Adrenal gland (tissue), 19 donors: ENCODE measurements at regions of chr14 and their contacts with region 1.

Region 1: GRCh38 chr14:75278422-75279161 is at the start of gene FOS:
- DNase-seq: peak; percentile 94 to 98 (median 96)
- H3K4me3 ChIP-seq: peak within 1 kb of the TSS; percentile 50 to 99 (median 86)
- H3K27ac ChIP-seq: peak within 1 kb of the TSS; percentile 97 to 99 (median 99)
- H3K4me1 ChIP-seq: peaks cover 18 to 30% of the 10 kb centered on the region in 2 donors
- H3K27me3 ChIP-seq: no peaks in the 10 kb centered on the region
- CTCF ChIP-seq: peak in 2 of 6 experiments; percentile 8 to 28
- POLR2A ChIP-seq: peak; percentile 99 to 100
- total RNA-seq, gene FOS: 47.9 to 393 (median 140) TPM

Region 2: DNA sequence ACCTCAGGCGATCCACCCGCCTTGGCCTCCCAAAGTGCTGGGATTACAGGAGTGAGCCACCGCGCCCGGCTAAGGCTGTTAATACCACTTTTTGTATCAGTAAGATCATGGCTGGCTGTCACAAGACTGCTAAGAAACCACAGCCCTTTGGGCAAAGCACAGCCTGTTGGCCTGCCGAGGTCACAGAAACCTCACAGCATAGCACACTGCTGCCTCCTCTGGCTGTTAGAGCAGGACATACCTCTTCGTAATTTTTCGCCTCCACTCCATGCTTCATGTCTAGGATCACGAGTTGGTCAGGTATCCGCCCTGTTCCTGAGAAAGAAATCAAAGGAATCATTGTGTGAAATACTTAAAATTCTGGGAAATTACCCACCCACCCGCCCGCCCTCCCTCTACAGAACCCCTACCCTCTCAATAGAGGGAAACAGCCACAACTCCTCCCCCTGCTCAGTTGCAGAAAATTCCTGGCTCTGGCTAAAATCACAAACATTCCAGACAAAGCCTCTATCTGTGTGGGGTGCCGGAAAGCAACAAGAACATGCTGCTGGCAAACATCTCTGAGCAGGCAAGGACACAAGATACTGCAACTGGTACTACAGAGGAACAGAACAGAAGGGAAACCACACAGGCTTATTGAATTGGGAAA is 131.0 kb before region 1 on chr14:
- intact Hi-C with region 1: loop called in 1 of 2 experiments (anchors 10 kb)
- DNase-seq: peak; percentile 61 to 93 (median 87)
- H3K4me3 ChIP-seq: peak overlapping the region in 1 of 4 donors; percentile 19
- H3K27ac ChIP-seq: peak overlapping the region; percentile 58 to 99 (median 91)
- H3K4me1 ChIP-seq: peaks cover 26 to 68% of the 10 kb centered on the region in 2 donors
- H3K27me3 ChIP-seq: no peaks in the 10 kb centered on the region
- CTCF ChIP-seq: peak; percentile 13 to 62 (median 52)
- POLR2A ChIP-seq: peak in 1 of 2 donors; percentile 43

Region 3: GRCh38 chr14:75389679-75390078 is 111.1 kb after region 1 on chr14:
- intact Hi-C with region 1: no loop called
- DNase-seq: no peak
- H3K4me3 ChIP-seq: no peak overlapping the region
- H3K27ac ChIP-seq: no peak overlapping the region
- H3K4me1 ChIP-seq: no peaks in the 10 kb centered on the region
- H3K27me3 ChIP-seq: no peaks in the 10 kb centered on the region
- CTCF ChIP-seq: no peak
- POLR2A ChIP-seq: no peak

Region 4: DNA sequence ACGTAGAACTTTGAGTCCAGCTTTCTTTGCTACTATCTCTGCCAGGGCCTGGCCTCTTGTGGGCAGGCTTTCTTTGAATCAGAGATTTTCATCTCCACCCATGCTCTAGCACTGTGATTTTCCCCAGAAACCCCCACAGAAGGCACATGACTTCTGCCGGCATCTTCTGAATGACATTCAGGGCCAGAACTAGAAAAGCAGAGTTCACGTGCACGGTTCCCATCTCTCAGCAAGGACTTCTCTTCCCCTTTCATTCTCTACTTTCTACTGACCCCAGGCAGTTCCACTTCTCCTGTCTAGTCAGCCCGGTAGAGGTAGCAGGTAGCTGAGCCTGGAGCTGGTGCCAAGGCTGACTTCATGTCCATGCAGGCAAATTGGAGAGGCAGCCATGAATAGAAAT is 270.6 kb after region 1 on chr14:
- intact Hi-C with region 1: no loop called
- DNase-seq: no peak
- H3K4me3 ChIP-seq: no peak overlapping the region
- H3K27ac ChIP-seq: no peak overlapping the region
- H3K4me1 ChIP-seq: no peaks in the 10 kb centered on the region
- H3K27me3 ChIP-seq: no peaks in the 10 kb centered on the region
- CTCF ChIP-seq: no peak
- POLR2A ChIP-seq: no peak

Region 5: DNA sequence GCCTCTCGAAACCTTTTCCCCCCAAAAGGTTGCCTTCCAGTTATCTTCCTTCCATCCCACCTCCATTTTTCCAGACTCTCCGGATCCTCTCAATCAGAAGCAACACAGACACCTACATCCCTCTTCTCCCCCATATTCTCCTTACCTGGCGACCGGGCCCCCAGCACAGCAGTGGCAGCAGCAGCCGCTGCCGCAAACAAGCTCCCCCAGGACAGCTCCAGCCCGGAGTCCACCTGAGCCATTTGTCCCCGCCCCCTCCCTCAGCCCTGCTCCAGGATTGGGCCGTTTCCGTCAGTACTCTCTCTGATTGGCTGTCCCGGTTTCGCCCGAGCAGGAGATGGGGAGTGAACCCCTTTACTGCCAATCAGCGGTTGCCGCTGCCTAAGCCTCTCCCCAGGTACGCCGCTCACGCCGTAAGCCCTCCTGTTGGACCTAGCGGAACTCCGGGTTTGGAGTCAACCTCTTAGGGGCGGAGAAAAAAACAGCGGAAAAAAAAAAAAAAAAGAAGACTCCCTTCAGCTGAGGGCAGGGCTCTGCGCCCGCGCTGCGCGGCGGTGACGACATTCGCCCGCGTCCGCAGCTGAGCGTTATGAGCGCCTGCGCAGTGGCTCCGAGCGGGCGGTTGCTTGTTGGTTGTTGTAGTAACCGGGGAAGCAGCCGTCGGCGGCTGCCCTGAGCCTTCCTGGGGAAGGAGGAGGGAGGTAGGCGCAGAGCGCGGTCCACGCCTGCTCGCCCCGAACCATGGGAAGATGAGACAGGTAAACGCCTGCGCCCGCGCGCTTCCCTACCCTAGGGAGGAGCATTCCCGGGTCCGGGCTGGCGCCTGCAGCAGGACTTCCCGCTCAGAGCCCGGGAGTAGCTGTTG is 382.3 kb after region 1 on chr14 and contains the starts of genes ERG28 and TTLL5:
- intact Hi-C with region 1: no loop called
- DNase-seq: peak; percentile 95 to 99 (median 98)
- H3K4me3 ChIP-seq: peak within 1 kb of the TSS; percentile 49 to 89 (median 68)
- H3K27ac ChIP-seq: peak within 1 kb of the TSS; percentile 14 to 87 (median 69)
- H3K4me1 ChIP-seq: peaks cover 18 to 46% of the 10 kb centered on the region in 2 donors
- H3K27me3 ChIP-seq: no peaks in the 10 kb centered on the region
- CTCF ChIP-seq: no peak
- POLR2A ChIP-seq: peak; percentile 36 to 70
- total RNA-seq, gene ERG28: 12.1 to 49.5 (median 23.4) TPM
- total RNA-seq, gene TTLL5: 13.5 to 34.0 (median 24.6) TPM